HCT116 (cell line): ENCODE measurements at regions of chr16 and their contacts with region 1.

Region 1: DNA sequence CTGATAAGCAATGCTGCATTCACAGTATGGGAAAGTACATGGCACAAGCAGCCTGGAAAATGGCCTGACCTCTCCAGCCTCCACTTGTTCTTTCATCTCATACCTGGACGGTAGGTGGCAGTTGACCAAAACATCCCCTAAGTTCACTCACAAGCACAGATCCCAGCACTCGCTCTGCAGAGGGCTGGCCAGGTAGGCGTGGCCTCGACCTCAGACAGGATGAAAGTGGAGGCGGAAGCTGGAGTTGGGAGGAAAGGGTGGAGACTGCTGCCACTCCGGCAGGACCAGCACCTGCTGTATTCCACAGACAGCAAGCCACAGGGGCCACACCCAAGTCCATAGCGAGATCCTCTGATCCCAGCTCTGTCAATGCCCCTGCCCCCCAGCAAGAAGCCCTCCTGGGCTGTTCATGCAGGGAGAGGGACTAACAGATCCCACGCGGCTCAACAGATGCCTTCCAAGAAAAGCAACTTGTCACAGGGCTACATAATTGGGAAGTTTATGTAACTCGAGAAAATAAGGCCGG is 31.3 kb downstream of the ZCCHC14 start:
- DNase-seq: peak; percentile 98
- ATAC-seq: peak; percentile 90
- H3K4me3 ChIP-seq: peak overlapping the region; percentile 35 to 44
- H3K27ac ChIP-seq: no peak overlapping the region
- H3K4me1 ChIP-seq: peaks cover 48 to 61% of the 10 kb centered on the region in 2 experiments
- H3K27me3 ChIP-seq: no peaks in the 10 kb centered on the region
- CTCF ChIP-seq: peak; percentile 73 to 82 (median 79); a peak in 5 of 6 replicates
- POLR2A ChIP-seq: no peak
- RAD21 ChIP-seq: peak; percentile 73

Region 2: DNA sequence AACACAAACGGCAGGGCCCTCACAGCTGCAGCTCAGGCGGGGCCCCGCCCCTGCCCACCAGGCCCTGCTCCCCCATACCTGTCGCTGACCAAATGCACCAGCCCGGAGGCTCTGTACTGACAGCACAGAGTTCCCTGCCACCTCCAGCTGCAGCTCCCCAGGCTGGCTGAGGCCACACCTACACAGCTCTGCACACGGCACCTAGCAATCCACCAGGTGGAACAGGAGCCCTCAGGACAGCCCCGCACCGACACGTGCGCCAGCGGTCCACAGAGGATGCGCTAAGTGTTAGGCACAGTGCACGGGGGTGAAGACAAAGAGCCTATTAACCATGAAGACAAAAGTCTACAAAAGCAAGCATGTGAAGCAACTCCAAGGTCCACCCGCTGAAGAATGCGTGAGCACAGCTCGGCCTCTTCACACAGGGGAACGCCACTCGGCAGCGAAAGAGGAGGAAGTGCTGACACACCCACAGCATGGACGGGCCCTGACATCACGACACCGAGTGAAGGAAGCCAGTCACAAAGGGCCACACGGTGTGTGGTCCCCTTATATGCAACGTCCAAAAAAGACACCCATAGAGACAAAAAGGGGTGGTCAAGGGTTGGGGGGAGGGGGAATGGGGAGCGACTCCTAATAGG is 26.0 kb after region 1 on chr16:
- CTCF ChIA-PET with region 1: interaction called, 10 read pairs
- POLR2A ChIA-PET with region 1: no interaction called
- RAD21 ChIA-PET with region 1: no interaction called
- intact Hi-C with region 1: loop called (anchors 2 kb)
- DNase-seq: peak; percentile 69
- ATAC-seq: peak; percentile 94
- H3K4me3 ChIP-seq: peak overlapping the region; percentile 38 to 57
- H3K27ac ChIP-seq: peak overlapping the region; percentile 23
- H3K4me1 ChIP-seq: peaks cover 14 to 32% of the 10 kb centered on the region in 2 experiments; a peak in 3 of 4 replicates
- H3K27me3 ChIP-seq: no peaks in the 10 kb centered on the region
- CTCF ChIP-seq: no peak
- POLR2A ChIP-seq: no peak
- RAD21 ChIP-seq: no peak

Region 3: GRCh38 chr16:87492721-87493607 is 31.4 kb after region 1 on chr16 and contains the start of gene ZCCHC14:
- CTCF ChIA-PET with region 1: interaction called, 10 read pairs
- POLR2A ChIA-PET with region 1: no interaction called
- RAD21 ChIA-PET with region 1: interaction called in 1 of 2 experiments, 3 read pairs
- intact Hi-C with region 1: loop called (anchors 2 kb)
- DNase-seq: peak; percentile 98
- ATAC-seq: peak; percentile 98
- H3K4me3 ChIP-seq: peak within 1 kb of the TSS; percentile 54 to 64
- H3K27ac ChIP-seq: peak within 1 kb of the TSS; percentile 77; the same call in 1 of the 2 replicates
- H3K4me1 ChIP-seq: peaks cover 8 to 30% of the 10 kb centered on the region in 2 experiments; a peak in 3 of 4 replicates
- H3K27me3 ChIP-seq: no peaks in the 10 kb centered on the region
- CTCF ChIP-seq: no peak
- POLR2A ChIP-seq: peak; percentile 35
- RAD21 ChIP-seq: no peak
- total RNA-seq, gene ZCCHC14: 37.8 TPM